Activated B cell treated with CpG ODN at 0.5 μM for 24 hours (primary cell): ENCODE measurements at regions of chr15 and their contacts with region 1.

Region 1: GRCh38 chr15:29039466-29040369 is 153.9 kb downstream of the APBA2 start:
- DNase-seq: no peak
- ATAC-seq: no peak
- H3K4me3 Mint-ChIP-seq: no peak overlapping the region
- H3K27ac Mint-ChIP-seq: no peak overlapping the region
- H3K4me1 Mint-ChIP-seq: no peaks in the 10 kb centered on the region
- H3K27me3 Mint-ChIP-seq: no peaks in the 10 kb centered on the region
- CTCF ChIP-seq: no peak

Region 2: GRCh38 chr15:28975766-28976179 is 63.9 kb before region 1 on chr15:
- CTCF ChIA-PET with region 1: no interaction called
- POLR2A ChIA-PET with region 1: no interaction called
- intact Hi-C with region 1: loop called (anchors 10 kb)
- DNase-seq: no peak
- ATAC-seq: no peak
- H3K4me3 Mint-ChIP-seq: no peak overlapping the region
- H3K27ac Mint-ChIP-seq: no peak overlapping the region
- H3K4me1 Mint-ChIP-seq: no peaks in the 10 kb centered on the region
- H3K27me3 Mint-ChIP-seq: peaks cover 7% of the 10 kb centered on the region
- CTCF ChIP-seq: no peak